ENCODE measurements at regions of chr3 and their contacts with region 1.

Region 1: GRCh38 chr3:88003115-88003755 is 55.6 kb downstream of the CGGBP1 start:
- DNase-seq: peak in 4 of 14 experiments; percentile 26 to 61 (median 53)
- ATAC-seq: no peak
- H3K4me3 ChIP-seq: no peak overlapping the region
- H3K4me3 Mint-ChIP-seq: no peak overlapping the region
- H3K27ac ChIP-seq: no peak overlapping the region
- H3K27ac Mint-ChIP-seq: no peak overlapping the region
- H3K4me1 ChIP-seq: no peaks in the 10 kb centered on the region
- H3K4me1 Mint-ChIP-seq: peaks cover 12% of the 10 kb centered on the region
- H3K27me3 ChIP-seq: no peaks in the 10 kb centered on the region
- H3K27me3 Mint-ChIP-seq: peaks cover 5% of the 10 kb centered on the region
- CTCF ChIP-seq: peak; percentile 88

Region 2: DNA sequence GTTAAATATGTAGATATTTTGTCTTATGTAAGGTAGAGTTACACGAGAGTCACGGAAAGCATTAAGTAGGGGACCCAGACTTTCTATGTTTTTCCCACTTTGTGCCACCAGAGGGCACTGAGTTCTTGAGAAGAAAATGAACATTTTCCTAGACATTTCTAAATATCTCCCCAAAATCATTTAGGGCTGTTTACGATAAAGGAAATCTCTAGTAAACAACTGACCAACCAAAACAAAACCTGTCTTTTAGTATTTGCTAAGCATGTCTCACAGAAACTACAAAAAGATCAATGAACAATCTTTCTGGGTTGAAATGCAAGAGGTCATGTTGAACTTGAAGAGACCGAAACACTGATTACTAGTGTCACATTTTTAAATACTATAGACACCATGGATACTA is 743.0 kb before region 1 on chr3:
- CTCF ChIA-PET with region 1: no interaction called
- POLR2A ChIA-PET with region 1: no interaction called
- intact Hi-C with region 1: loop called in 1 of 2 experiments (anchors 1 kb)
- DNase-seq: peak in 10 of 14 experiments; percentile 3 to 62 (median 26)
- ATAC-seq: peak; percentile 68
- H3K4me3 ChIP-seq: no peak overlapping the region
- H3K4me3 Mint-ChIP-seq: no peak overlapping the region
- H3K27ac ChIP-seq: no peak overlapping the region
- H3K27ac Mint-ChIP-seq: no peak overlapping the region
- H3K4me1 ChIP-seq: no peaks in the 10 kb centered on the region
- H3K4me1 Mint-ChIP-seq: peaks cover 5% of the 10 kb centered on the region
- H3K27me3 ChIP-seq: no peaks in the 10 kb centered on the region
- H3K27me3 Mint-ChIP-seq: no peaks in the 10 kb centered on the region
- CTCF ChIP-seq: peak; percentile 78

Region 3: GRCh38 chr3:87298111-87298718 is 705.0 kb before region 1 on chr3:
- CTCF ChIA-PET with region 1: interaction called, 3 read pairs
- POLR2A ChIA-PET with region 1: no interaction called
- intact Hi-C with region 1: loop called (anchors 1 to 5 kb)
- DNase-seq: peak in 3 of 14 experiments; percentile 34 to 49 (median 45)
- ATAC-seq: peak; percentile 59
- H3K4me3 ChIP-seq: no peak overlapping the region
- H3K4me3 Mint-ChIP-seq: no peak overlapping the region
- H3K27ac ChIP-seq: no peak overlapping the region
- H3K27ac Mint-ChIP-seq: no peak overlapping the region
- H3K4me1 ChIP-seq: no peaks in the 10 kb centered on the region
- H3K4me1 Mint-ChIP-seq: peaks cover 5% of the 10 kb centered on the region
- H3K27me3 ChIP-seq: no peaks in the 10 kb centered on the region
- H3K27me3 Mint-ChIP-seq: no peaks in the 10 kb centered on the region
- CTCF ChIP-seq: peak; percentile 90

Region 4: GRCh38 chr3:87350364-87351199 is 652.7 kb before region 1 on chr3:
- CTCF ChIA-PET with region 1: interaction called, 4 read pairs
- POLR2A ChIA-PET with region 1: no interaction called
- intact Hi-C with region 1: loop called (anchors 1 to 2 kb)
- DNase-seq: peak in 5 of 14 experiments; percentile 2 to 70 (median 56)
- ATAC-seq: peak; percentile 89
- H3K4me3 ChIP-seq: no peak overlapping the region
- H3K4me3 Mint-ChIP-seq: no peak overlapping the region
- H3K27ac ChIP-seq: no peak overlapping the region
- H3K27ac Mint-ChIP-seq: no peak overlapping the region
- H3K4me1 ChIP-seq: no peaks in the 10 kb centered on the region
- H3K4me1 Mint-ChIP-seq: no peaks in the 10 kb centered on the region
- H3K27me3 ChIP-seq: no peaks in the 10 kb centered on the region
- H3K27me3 Mint-ChIP-seq: no peaks in the 10 kb centered on the region
- CTCF ChIP-seq: peak; percentile 94

Region 5: GRCh38 chr3:87771341-87772192 is 231.7 kb before region 1 on chr3:
- CTCF ChIA-PET with region 1: interaction called, 4 read pairs
- POLR2A ChIA-PET with region 1: no interaction called
- intact Hi-C with region 1: loop called (anchors 1 to 2 kb)
- DNase-seq: peak in 12 of 14 experiments; percentile 6 to 70 (median 27)
- ATAC-seq: peak; percentile 78
- H3K4me3 ChIP-seq: no peak overlapping the region
- H3K4me3 Mint-ChIP-seq: no peak overlapping the region
- H3K27ac ChIP-seq: no peak overlapping the region
- H3K27ac Mint-ChIP-seq: no peak overlapping the region
- H3K4me1 ChIP-seq: no peaks in the 10 kb centered on the region
- H3K4me1 Mint-ChIP-seq: no peaks in the 10 kb centered on the region
- H3K27me3 ChIP-seq: no peaks in the 10 kb centered on the region
- H3K27me3 Mint-ChIP-seq: peaks cover 15% of the 10 kb centered on the region
- CTCF ChIP-seq: peak; percentile 64

Region 6: GRCh38 chr3:88101142-88101541 is 97.9 kb after region 1 on chr3:
- CTCF ChIA-PET with region 1: no interaction called
- POLR2A ChIA-PET with region 1: no interaction called
- intact Hi-C with region 1: loop called in 1 of 2 experiments (anchors 5 kb)
- DNase-seq: no peak
- ATAC-seq: no peak
- H3K4me3 ChIP-seq: no peak overlapping the region
- H3K4me3 Mint-ChIP-seq: no peak overlapping the region
- H3K27ac ChIP-seq: no peak overlapping the region
- H3K27ac Mint-ChIP-seq: no peak overlapping the region
- H3K4me1 ChIP-seq: no peaks in the 10 kb centered on the region
- H3K4me1 Mint-ChIP-seq: peaks cover 21% of the 10 kb centered on the region
- H3K27me3 ChIP-seq: no peaks in the 10 kb centered on the region
- H3K27me3 Mint-ChIP-seq: no peaks in the 10 kb centered on the region
- CTCF ChIP-seq: no peak

Measured in CD4-positive, alpha-beta T cell (primary cell).